GM12878 (cell line): ENCODE measurements at regions of chr11 and their contacts with region 1.

Region 1: DNA sequence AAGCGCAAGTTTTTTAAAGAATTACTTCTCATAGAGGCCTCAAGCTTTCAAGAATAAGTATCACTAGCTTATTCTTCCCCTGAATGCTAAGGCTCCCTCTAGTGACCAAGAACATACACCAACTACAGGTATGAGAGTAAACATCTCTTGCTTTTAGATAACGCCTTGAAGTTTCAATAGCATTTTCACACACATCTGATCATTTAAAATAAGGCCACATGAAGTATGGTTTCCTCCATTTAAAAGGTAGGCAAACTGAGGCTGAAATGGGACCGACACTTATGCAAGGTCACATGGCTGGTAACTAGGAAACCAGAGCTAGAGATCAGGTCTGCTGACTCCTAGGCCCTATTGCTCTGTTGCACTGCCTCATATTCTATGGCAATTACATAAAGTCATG is 66.5 kb downstream of the CCDC34 start:
- DNase-seq: no peak
- ATAC-seq: peak; percentile 98
- H3K4me3 ChIP-seq: no peak overlapping the region
- H3K27ac ChIP-seq: no peak overlapping the region
- H3K4me1 ChIP-seq: no peaks in the 10 kb centered on the region
- H3K27me3 ChIP-seq: no peaks in the 10 kb centered on the region
- CTCF ChIP-seq: peak; percentile 63 to 67 (median 63)
- EP300 ChIP-seq: no peak
- POLR2A ChIP-seq: no peak
- RAD21 ChIP-seq: peak; percentile 69

Region 2: GRCh38 chr11:27183672-27184457 is 112.6 kb before region 1 on chr11:
- CTCF ChIA-PET with region 1: interaction called, 209 read pairs
- POLR2A ChIA-PET with region 1: interaction called, 5 read pairs
- RAD21 ChIA-PET with region 1: interaction called, 165 read pairs
- SMC1A ChIA-PET with region 1: interaction called, 179 read pairs
- in situ Hi-C with region 1: loop called (anchors 5 kb)
- intact Hi-C with region 1: loop called (anchors 1 kb)
- DNase-seq: peak; percentile 12
- ATAC-seq: peak; percentile 80
- H3K4me3 ChIP-seq: no peak overlapping the region
- H3K27ac ChIP-seq: no peak overlapping the region
- H3K4me1 ChIP-seq: no peaks in the 10 kb centered on the region
- H3K27me3 ChIP-seq: no peaks in the 10 kb centered on the region
- CTCF ChIP-seq: peak; percentile 57 to 76 (median 59)
- EP300 ChIP-seq: no peak
- POLR2A ChIP-seq: no peak
- RAD21 ChIP-seq: peak; percentile 91

Region 3: DNA sequence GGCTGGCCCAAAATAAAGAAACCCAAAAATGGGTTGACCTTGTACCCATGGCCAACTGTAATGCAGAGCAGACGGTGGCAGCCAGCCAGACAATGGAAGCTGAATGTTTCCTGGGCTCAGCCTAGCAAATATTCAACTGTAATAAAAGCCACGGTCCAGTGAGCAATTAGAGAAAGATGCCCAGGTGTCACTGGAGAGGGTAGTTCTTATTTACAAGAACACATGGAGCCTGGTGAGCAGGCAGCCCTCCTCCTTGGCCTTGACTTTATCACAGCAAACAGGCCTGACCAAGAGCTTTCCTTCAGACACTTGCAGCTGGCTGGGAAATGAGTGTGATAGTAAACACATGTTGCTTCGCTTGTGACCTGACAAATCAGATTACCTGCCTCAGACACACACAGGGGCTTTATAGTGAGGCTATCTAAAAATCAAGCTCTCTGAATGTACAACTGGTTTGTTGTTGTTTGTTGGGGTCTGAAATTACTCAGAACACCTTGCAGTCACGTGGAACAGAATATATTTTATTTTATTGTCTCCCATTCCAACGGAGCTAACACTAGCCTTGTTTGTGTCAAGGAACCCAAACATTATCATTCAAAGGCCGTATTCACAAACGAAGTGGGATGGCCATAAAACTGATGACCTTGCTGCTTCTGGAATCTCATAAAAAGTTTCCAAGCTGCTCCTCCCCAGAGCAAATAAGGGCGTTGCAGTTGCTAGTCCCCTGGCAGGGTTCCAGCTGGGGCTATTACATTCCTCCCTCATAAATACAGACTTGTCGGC is 94.9 kb before region 1 on chr11:
- CTCF ChIA-PET with region 1: interaction called, 72 read pairs
- POLR2A ChIA-PET with region 1: interaction called, 3 read pairs
- RAD21 ChIA-PET with region 1: interaction called, 14 read pairs
- SMC1A ChIA-PET with region 1: interaction called, 29 read pairs
- in situ Hi-C with region 1: no loop called
- intact Hi-C with region 1: loop called (anchors 2 kb)
- DNase-seq: no peak
- ATAC-seq: no peak
- H3K4me3 ChIP-seq: no peak overlapping the region
- H3K27ac ChIP-seq: no peak overlapping the region
- H3K4me1 ChIP-seq: no peaks in the 10 kb centered on the region
- H3K27me3 ChIP-seq: no peaks in the 10 kb centered on the region
- CTCF ChIP-seq: no peak
- EP300 ChIP-seq: no peak
- POLR2A ChIP-seq: no peak
- RAD21 ChIP-seq: no peak

Region 4: GRCh38 chr11:27234043-27234668 is 62.3 kb before region 1 on chr11:
- CTCF ChIA-PET with region 1: interaction called, 30 read pairs
- POLR2A ChIA-PET with region 1: interaction called, 6 read pairs
- RAD21 ChIA-PET with region 1: interaction called, 36 read pairs
- SMC1A ChIA-PET with region 1: interaction called, 34 read pairs
- in situ Hi-C with region 1: no loop called
- intact Hi-C with region 1: loop called (anchors 1 kb)
- DNase-seq: peak; percentile 91
- ATAC-seq: peak; percentile 95
- H3K4me3 ChIP-seq: no peak overlapping the region
- H3K27ac ChIP-seq: peak overlapping the region; percentile 56
- H3K4me1 ChIP-seq: peaks cover 3% of the 10 kb centered on the region; the same call in 1 of the 2 replicates
- H3K27me3 ChIP-seq: no peaks in the 10 kb centered on the region
- CTCF ChIP-seq: 0 out of 6 replicates have a peak, but pooled peaks of 1 of the 3 experiments have one; percentile 6
- EP300 ChIP-seq: peak; percentile 94 to 97
- POLR2A ChIP-seq: no peak
- RAD21 ChIP-seq: no peak

Region 5: GRCh38 chr11:27274854-27275395 is 21.6 kb before region 1 on chr11:
- CTCF ChIA-PET with region 1: interaction called, 15 read pairs
- POLR2A ChIA-PET with region 1: no interaction called
- RAD21 ChIA-PET with region 1: interaction called, 4 read pairs
- SMC1A ChIA-PET with region 1: no interaction called
- in situ Hi-C with region 1: no loop called
- intact Hi-C with region 1: no loop called
- DNase-seq: no peak
- ATAC-seq: no peak
- H3K4me3 ChIP-seq: no peak overlapping the region
- H3K27ac ChIP-seq: no peak overlapping the region
- H3K4me1 ChIP-seq: no peaks in the 10 kb centered on the region
- H3K27me3 ChIP-seq: no peaks in the 10 kb centered on the region
- CTCF ChIP-seq: no peak
- EP300 ChIP-seq: no peak
- POLR2A ChIP-seq: no peak
- RAD21 ChIP-seq: no peak

Region 6: DNA sequence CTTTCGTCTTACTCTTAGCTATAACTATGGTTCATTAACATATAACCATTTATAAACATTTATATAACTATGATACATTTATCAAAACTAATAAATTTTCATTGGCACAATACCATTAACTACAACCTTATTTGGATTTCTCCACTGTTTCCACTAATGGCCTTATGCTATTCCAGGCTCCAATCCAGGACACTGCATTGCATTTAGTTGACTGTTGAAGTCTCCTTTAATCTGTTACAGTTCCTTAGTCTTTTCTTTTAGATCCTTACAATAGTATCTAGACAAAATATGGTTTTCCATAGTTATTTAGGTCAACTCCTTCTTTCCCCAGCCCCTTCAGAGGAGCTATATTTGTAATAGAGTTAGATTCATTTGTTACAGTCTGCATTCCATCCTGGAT is 19.3 kb after region 1 on chr11:
- CTCF ChIA-PET with region 1: interaction called, 20 read pairs
- POLR2A ChIA-PET with region 1: no interaction called
- RAD21 ChIA-PET with region 1: interaction called, 5 read pairs
- SMC1A ChIA-PET with region 1: interaction called, 5 read pairs
- in situ Hi-C with region 1: no loop called
- intact Hi-C with region 1: no loop called
- DNase-seq: no peak
- ATAC-seq: no peak
- H3K4me3 ChIP-seq: no peak overlapping the region
- H3K27ac ChIP-seq: no peak overlapping the region
- H3K4me1 ChIP-seq: no peaks in the 10 kb centered on the region
- H3K27me3 ChIP-seq: no peaks in the 10 kb centered on the region
- CTCF ChIP-seq: no peak
- EP300 ChIP-seq: no peak
- POLR2A ChIP-seq: no peak
- RAD21 ChIP-seq: no peak

Region 7: GRCh38 chr11:27497284-27497866 is 200.9 kb after region 1 on chr11:
- CTCF ChIA-PET with region 1: interaction called, 59 read pairs
- POLR2A ChIA-PET with region 1: no interaction called
- RAD21 ChIA-PET with region 1: interaction called, 12 read pairs
- SMC1A ChIA-PET with region 1: interaction called, 14 read pairs
- in situ Hi-C with region 1: no loop called
- intact Hi-C with region 1: no loop called
- DNase-seq: no peak
- ATAC-seq: peak; percentile 86
- H3K4me3 ChIP-seq: no peak overlapping the region
- H3K27ac ChIP-seq: no peak overlapping the region
- H3K4me1 ChIP-seq: no peaks in the 10 kb centered on the region
- H3K27me3 ChIP-seq: no peaks in the 10 kb centered on the region
- CTCF ChIP-seq: peak; percentile 28 to 51 (median 30); a peak in 4 of 6 replicates
- EP300 ChIP-seq: no peak
- POLR2A ChIP-seq: no peak
- RAD21 ChIP-seq: peak; percentile 41; the same call in 1 of the 2 replicates